CD4-positive, alpha-beta T cell (primary cell): ENCODE measurements at regions of chr5 and their contacts with region 1.

Region 1: GRCh38 chr5:134845852-134846640 is at the start of gene C5orf24:
- DNase-seq: peak; percentile 83 to 98 (median 90)
- ATAC-seq: peak; percentile 90
- H3K4me3 ChIP-seq: peak within 1 kb of the TSS; percentile 76
- H3K4me3 Mint-ChIP-seq: peak within 1 kb of the TSS; percentile 86
- H3K27ac ChIP-seq: peak within 1 kb of the TSS; percentile 87
- H3K27ac Mint-ChIP-seq: peak within 1 kb of the TSS; percentile 95
- H3K4me1 ChIP-seq: peaks cover 35% of the 10 kb centered on the region
- H3K4me1 Mint-ChIP-seq: peaks cover 26% of the 10 kb centered on the region
- H3K27me3 ChIP-seq: no peaks in the 10 kb centered on the region
- H3K27me3 Mint-ChIP-seq: no peaks in the 10 kb centered on the region
- CTCF ChIP-seq: no peak
- total RNA-seq, gene C5orf24: 34.6 to 36.5 TPM

Region 2: DNA sequence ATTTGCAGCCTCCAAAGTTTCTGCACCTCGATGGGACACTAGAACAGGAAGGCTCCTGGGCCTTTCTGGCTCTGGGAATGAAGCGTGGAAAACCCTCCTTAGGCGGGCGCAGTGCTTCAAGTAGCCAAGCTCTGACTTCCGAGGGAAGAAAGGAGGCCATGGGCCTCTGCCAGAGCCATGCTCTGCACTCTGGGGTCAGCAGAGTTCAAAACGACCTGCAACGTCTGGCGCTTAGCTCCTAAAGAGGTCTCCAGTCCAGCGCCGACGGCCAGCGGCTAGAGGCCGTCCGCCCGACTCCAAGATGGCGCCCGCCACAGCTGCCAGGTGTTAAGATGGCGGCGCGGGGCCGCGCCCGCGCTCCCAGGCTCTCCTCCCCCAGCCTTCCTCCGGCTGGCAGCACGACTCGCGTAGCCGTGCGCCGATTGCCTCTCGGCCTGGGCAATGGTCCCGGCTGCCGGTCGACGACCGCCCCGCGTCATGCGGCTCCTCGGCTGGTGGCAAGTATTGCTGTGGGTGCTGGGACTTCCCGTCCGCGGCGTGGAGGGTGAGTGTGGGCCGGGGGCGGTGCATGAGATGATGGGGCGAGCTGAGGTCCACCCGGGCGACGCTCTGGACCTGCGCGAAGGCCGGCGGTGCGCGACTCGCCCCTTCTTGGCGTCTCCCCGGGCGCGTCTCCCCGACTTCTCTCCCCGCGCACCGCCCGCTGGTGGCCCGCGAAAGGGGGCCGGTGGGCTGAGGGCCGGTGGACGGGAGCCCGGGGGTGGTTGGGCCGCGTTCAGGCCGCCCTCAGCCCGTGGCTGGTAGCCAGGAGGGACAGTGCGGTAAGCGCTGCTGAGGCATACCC is 28.2 kb after region 1 on chr5 and contains the start of gene TXNDC15:
- CTCF ChIA-PET with region 1: interaction called, 3 read pairs
- POLR2A ChIA-PET with region 1: interaction called, 66 read pairs
- intact Hi-C with region 1: loop called (anchors 1 kb)
- DNase-seq: peak; percentile 66 to 92 (median 76)
- ATAC-seq: peak; percentile 92
- H3K4me3 ChIP-seq: peak within 1 kb of the TSS; percentile 68
- H3K4me3 Mint-ChIP-seq: peak within 1 kb of the TSS; percentile 96
- H3K27ac ChIP-seq: peak within 1 kb of the TSS; percentile 87 to 88
- H3K27ac Mint-ChIP-seq: peak within 1 kb of the TSS; percentile 93
- H3K4me1 ChIP-seq: peaks cover 39% of the 10 kb centered on the region
- H3K4me1 Mint-ChIP-seq: peaks cover 43% of the 10 kb centered on the region
- H3K27me3 ChIP-seq: no peaks in the 10 kb centered on the region
- H3K27me3 Mint-ChIP-seq: no peaks in the 10 kb centered on the region
- CTCF ChIP-seq: no peak
- total RNA-seq, gene TXNDC15: 19.6 to 20.0 TPM